PC-9 (cell line): ENCODE measurements at regions of chr12 and their contacts with region 1.

Region 1: GRCh38 chr12:33012226-33012807 is 115.7 kb upstream of the PKP2 start:
- DNase-seq: peak; percentile 63 to 86
- H3K4me3 ChIP-seq: peak overlapping the region; percentile 30; the same call in 1 of the 2 replicates
- H3K27ac ChIP-seq: peak overlapping the region; percentile 37
- H3K4me1 ChIP-seq: peaks cover 17% of the 10 kb centered on the region
- H3K27me3 ChIP-seq: no peaks in the 10 kb centered on the region
- CTCF ChIP-seq: no peak

Region 2: DNA sequence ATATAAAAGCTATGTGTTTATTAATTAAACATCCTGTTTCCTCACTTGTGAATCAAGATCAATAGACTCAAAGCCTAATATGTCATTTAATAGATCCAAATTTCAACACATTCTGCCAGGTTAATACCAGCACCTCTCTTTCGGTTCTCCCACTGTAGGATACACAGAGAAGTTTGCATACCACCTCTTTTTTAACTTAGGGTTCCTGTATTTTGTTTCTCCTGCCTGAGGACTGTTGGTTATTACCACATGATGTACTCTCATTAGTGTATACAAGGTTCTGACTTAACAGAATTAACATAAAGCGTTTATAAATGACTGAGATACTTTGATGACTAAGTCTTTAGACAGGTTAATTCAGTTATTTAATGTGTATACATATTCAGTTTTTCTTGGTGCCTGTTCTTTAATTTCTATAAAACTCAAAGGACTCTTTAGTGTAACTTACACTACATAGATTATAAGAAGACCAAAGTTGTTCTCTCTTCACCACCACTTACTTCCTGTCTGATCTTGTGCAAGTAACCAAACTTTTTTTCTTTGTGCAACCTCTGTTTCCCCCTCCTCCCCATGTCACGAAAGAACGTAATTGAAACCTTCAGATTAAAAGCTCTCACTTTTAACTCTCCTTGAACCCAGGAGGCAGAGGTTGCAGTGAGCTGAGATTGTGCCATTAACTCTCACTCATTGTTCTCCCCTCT is 423.0 kb before region 1 on chr12:
- CTCF ChIA-PET with region 1: no interaction called
- POLR2A ChIA-PET with region 1: no interaction called
- intact Hi-C with region 1: no loop called
- DNase-seq: no peak
- H3K4me3 ChIP-seq: no peak overlapping the region
- H3K27ac ChIP-seq: no peak overlapping the region
- H3K4me1 ChIP-seq: no peaks in the 10 kb centered on the region
- H3K27me3 ChIP-seq: no peaks in the 10 kb centered on the region
- CTCF ChIP-seq: no peak

Region 3: DNA sequence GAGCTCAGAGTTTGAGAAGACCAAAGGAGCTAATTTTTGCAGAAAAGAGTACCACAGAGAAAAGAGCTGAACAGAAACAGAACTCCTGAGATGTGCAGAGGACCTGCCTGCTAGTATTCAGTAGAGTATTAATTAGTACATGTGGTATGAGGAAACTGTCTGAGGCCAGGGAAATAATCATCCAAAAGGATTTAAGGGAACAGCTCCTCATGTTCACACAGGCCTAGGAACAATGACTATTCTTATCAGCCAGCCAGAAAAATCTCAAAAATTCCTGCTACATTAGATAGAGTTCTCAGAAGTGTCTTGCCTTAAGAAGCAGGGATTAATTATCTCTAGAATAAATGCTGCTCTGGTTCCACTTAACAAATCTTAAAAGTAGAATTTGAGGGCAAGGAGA is 152.1 kb before region 1 on chr12:
- CTCF ChIA-PET with region 1: no interaction called
- POLR2A ChIA-PET with region 1: no interaction called
- intact Hi-C with region 1: no loop called
- DNase-seq: no peak
- H3K4me3 ChIP-seq: no peak overlapping the region
- H3K27ac ChIP-seq: no peak overlapping the region
- H3K4me1 ChIP-seq: no peaks in the 10 kb centered on the region
- H3K27me3 ChIP-seq: no peaks in the 10 kb centered on the region
- CTCF ChIP-seq: no peak

Region 4: DNA sequence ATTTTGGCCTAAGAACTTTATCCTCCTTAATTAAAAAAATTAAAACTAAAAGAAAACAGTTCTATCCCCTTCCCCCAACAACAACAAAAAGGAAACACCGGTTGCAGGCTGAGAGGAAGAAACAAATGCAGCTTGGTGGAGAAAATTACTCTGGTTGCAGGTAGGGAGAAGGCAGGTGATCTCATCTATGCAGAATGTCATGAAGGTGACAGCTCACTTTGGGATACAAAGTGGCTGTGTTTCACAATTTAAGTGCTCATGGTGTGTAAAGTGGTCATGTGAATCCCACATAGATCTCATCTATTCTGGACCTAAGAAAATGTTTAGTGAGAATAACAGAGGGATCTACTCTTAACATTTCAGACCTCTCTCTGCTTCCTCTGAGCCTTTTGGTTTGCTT is 104.0 kb after region 1 on chr12:
- CTCF ChIA-PET with region 1: no interaction called
- POLR2A ChIA-PET with region 1: interaction called, 3 read pairs
- intact Hi-C with region 1: loop called (anchors 5 kb)
- DNase-seq: peak in 1 of 2 experiments; percentile 9
- H3K4me3 ChIP-seq: no peak overlapping the region
- H3K27ac ChIP-seq: no peak overlapping the region
- H3K4me1 ChIP-seq: 0 out of 2 replicates have a peak, but pooled peaks cover 6% of the 10 kb centered on the region
- H3K27me3 ChIP-seq: no peaks in the 10 kb centered on the region
- CTCF ChIP-seq: no peak